A549 (cell line): ENCODE measurements at regions of chr7 and their contacts with region 1.

Region 1: DNA sequence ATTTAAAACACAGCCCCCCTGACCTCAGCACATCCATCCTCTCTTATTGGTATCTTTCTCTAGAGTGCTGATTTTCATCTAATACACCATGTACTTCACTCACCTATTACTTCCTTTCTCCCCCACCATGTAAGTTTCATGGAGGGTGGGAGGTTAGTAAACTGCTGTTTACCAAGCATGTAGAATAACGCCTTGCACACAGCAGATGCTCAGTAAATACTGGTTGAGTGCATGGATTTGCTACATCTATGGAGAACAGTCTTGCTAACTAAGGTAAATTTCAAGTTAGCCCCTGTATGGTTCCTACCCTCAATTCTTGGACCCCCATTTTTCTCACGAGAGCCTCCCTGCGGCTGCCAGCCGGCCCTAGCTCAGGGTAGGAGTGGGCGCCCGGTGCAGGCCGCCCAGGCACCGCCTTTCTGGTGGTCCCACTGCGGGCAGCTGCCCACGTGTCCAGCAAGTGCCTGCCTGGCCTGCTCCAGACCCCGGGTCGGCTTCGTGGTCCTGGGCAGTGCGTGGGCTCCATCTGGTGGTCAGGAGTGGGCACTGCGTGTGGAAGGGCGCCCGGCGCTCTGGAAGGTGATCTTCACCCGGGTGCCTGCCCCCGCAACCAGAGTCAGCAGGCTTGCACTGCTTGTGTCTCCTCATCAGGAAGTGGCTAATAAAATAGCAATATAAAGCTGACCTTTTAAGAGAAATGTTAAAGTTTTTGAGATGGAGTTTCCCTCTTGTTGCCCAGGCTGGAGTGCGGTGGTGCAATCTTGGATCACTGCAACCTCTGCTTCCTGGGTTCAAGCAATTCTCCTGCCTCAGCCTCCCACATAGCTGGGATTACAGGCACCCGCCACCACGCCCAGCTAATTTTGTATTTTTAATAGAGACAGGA is 63.4 kb upstream of the DNAJB6 start:
- DNase-seq: peak; percentile 69 to 95
- ATAC-seq: peak; percentile 74 to 86
- H3K4me3 ChIP-seq: no peak overlapping the region
- H3K27ac ChIP-seq: peak overlapping the region; percentile 59 to 62; a peak in 2 of 6 replicates
- H3K4me1 ChIP-seq: peaks cover 20% of the 10 kb centered on the region; the same call in 2 of the 3 replicates
- CTCF ChIP-seq: peak; percentile 86
- EP300 ChIP-seq: no peak
- POLR2A ChIP-seq: no peak
- RAD21 ChIP-seq: peak; percentile 80 to 83

Region 2: GRCh38 chr7:156969972-156970420 is 303.5 kb before region 1 on chr7:
- CTCF ChIA-PET with region 1: interaction called, 16 read pairs
- POLR2A ChIA-PET with region 1: no interaction called
- DNase-seq: no peak
- ATAC-seq: peak in 1 of 2 experiments; percentile 79; a peak in 3 of 6 replicates
- H3K4me3 ChIP-seq: no peak overlapping the region
- H3K27ac ChIP-seq: no peak overlapping the region
- H3K4me1 ChIP-seq: no peaks in the 10 kb centered on the region
- CTCF ChIP-seq: peak; percentile 60
- EP300 ChIP-seq: no peak
- POLR2A ChIP-seq: no peak
- RAD21 ChIP-seq: peak; percentile 48 to 54; a peak in 4 of 5 replicates

Region 3: DNA sequence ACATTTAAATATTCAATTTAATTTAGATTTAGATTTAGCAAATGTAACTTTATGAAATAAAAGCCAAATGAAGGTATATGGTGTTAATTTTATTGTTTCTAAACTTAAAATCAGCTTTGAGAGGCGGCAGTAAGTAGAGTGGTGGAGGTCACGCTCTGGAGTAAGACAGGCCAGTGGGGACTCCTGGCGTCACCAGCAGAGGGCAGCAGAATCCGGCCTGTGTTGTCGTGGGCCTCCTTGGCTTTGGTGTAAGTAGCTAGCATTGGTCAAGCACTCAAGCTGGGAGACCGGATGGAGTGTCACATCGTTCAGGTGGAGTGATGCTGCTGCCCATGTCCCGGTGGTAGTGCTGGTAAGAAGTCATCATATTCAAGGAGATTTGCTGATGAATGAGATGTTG is 35.4 kb before region 1 on chr7:
- CTCF ChIA-PET with region 1: interaction called, 17 read pairs
- POLR2A ChIA-PET with region 1: no interaction called
- DNase-seq: peak in 1 of 2 experiments; percentile 37
- ATAC-seq: peak in 1 of 2 experiments; percentile 82; a peak in 3 of 6 replicates
- H3K4me3 ChIP-seq: no peak overlapping the region
- H3K27ac ChIP-seq: no peak overlapping the region
- H3K4me1 ChIP-seq: peaks cover 8% of the 10 kb centered on the region; the same call in 1 of the 3 replicates
- CTCF ChIP-seq: peak; percentile 28; the same call in 1 of the 3 replicates
- EP300 ChIP-seq: no peak
- POLR2A ChIP-seq: no peak
- RAD21 ChIP-seq: peak; percentile 10 to 28; a peak in 1 of 5 replicates

Region 4: DNA sequence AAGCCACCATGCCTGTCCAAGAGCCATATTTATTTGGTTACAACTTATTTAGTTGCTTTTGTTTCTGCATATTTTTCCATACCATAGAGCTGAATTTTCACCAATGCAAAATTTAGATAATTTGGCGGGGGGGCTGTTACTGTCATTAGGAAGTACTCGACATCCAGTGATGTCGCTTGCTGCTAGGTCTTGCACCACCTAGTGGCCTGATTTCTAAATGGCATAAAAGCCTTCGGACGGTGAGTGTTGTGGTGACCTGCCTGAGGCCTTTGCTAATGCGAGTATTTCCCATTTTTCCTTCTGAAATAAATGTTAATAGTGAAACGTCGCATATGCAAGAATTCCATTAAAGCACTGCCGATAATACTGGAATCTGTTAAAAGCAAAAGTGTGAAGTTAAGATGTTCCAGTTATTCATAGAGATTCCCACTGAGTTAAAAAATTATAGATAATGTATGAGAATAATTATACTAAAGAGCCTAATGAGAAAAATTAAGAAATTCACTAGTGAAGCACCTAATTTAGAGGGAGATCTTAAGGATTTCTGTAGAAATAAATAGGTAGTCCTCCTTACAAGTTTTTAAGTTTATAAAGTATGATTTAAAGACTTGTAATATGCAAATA is 22.7 kb before region 1 on chr7:
- CTCF ChIA-PET with region 1: interaction called, 47 read pairs
- POLR2A ChIA-PET with region 1: no interaction called
- DNase-seq: peak; percentile 38 to 73
- ATAC-seq: peak; percentile 83 to 85; a peak in 5 of 6 replicates
- H3K4me3 ChIP-seq: no peak overlapping the region
- H3K27ac ChIP-seq: no peak overlapping the region
- H3K4me1 ChIP-seq: no peaks in the 10 kb centered on the region
- CTCF ChIP-seq: peak; percentile 73
- EP300 ChIP-seq: no peak
- POLR2A ChIP-seq: no peak
- RAD21 ChIP-seq: peak in 1 of 2 experiments; percentile 24; a peak in 2 of 5 replicates

Region 5: DNA sequence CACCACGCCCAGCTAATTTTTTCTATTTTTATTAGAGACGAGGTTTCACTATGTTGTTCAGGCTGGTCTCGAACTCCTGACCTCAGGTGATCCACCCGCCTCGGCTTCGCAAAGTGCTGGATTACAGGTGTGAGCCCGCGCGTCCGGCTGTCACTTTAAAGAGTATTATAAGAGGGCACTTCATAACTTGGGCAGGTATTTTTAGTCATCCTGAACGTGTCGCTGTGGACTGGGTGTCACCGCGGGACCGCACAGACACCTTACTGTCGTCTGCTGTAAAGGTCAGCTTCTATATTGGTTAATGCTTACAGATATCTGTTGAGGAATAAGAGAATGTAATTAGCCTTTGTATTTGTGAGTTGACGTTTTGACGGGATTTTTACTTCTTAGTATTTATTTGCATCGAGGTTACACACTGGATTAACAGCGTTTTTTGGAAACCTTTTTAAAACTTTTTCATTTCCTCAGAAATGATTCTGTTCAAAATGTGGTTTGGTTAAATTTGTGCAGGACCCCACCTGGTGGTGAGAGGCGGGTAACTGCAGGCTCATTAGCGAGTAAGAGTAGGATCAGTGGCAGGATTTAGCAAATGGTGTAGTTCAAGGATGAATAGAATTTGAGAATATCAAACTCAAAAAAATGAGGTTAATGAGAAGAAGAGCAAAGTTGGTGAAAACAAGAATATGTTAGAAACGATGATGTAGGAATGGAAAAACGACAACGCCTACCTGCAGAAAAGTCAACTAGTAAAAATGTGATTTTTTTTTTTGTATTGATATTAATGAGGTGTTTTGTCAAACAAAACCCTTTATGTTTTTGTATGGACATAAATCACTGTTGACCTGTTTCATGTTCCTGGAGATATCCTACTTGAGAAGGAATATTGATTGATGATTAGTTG is 66.6 kb after region 1 on chr7:
- CTCF ChIA-PET with region 1: interaction called, 21 read pairs
- POLR2A ChIA-PET with region 1: no interaction called
- DNase-seq: peak; percentile 69 to 75
- ATAC-seq: peak in 1 of 2 experiments; percentile 35; a peak in 3 of 6 replicates
- H3K4me3 ChIP-seq: no peak overlapping the region
- H3K27ac ChIP-seq: peak overlapping the region in 1 of 2 experiments; percentile 9; a peak in 1 of 6 replicates
- H3K4me1 ChIP-seq: peaks cover 28% of the 10 kb centered on the region
- CTCF ChIP-seq: peak; percentile 80
- EP300 ChIP-seq: no peak
- POLR2A ChIP-seq: no peak
- RAD21 ChIP-seq: peak; percentile 69 to 73

Region 6: GRCh38 chr7:157751406-157751805 is 478.0 kb after region 1 on chr7:
- CTCF ChIA-PET with region 1: no interaction called
- POLR2A ChIA-PET with region 1: no interaction called
- DNase-seq: no peak
- ATAC-seq: no peak
- H3K4me3 ChIP-seq: no peak overlapping the region
- H3K27ac ChIP-seq: no peak overlapping the region
- H3K4me1 ChIP-seq: no peaks in the 10 kb centered on the region
- CTCF ChIP-seq: no peak
- EP300 ChIP-seq: no peak
- POLR2A ChIP-seq: no peak
- RAD21 ChIP-seq: no peak